ENCODE measurements at regions of chr9 and their contacts with region 1.

Region 1: GRCh38 chr9:89984214-89984613 is 379.4 kb downstream of the GADD45G start:
- DNase-seq: no peak
- ATAC-seq: no peak
- H3K4me3 ChIP-seq: no peak overlapping the region
- H3K27ac ChIP-seq: no peak overlapping the region
- H3K4me1 ChIP-seq: no peaks in the 10 kb centered on the region
- H3K27me3 ChIP-seq: no peaks in the 10 kb centered on the region
- CTCF ChIP-seq: no peak
- POLR2A ChIP-seq: no peak

Region 2: DNA sequence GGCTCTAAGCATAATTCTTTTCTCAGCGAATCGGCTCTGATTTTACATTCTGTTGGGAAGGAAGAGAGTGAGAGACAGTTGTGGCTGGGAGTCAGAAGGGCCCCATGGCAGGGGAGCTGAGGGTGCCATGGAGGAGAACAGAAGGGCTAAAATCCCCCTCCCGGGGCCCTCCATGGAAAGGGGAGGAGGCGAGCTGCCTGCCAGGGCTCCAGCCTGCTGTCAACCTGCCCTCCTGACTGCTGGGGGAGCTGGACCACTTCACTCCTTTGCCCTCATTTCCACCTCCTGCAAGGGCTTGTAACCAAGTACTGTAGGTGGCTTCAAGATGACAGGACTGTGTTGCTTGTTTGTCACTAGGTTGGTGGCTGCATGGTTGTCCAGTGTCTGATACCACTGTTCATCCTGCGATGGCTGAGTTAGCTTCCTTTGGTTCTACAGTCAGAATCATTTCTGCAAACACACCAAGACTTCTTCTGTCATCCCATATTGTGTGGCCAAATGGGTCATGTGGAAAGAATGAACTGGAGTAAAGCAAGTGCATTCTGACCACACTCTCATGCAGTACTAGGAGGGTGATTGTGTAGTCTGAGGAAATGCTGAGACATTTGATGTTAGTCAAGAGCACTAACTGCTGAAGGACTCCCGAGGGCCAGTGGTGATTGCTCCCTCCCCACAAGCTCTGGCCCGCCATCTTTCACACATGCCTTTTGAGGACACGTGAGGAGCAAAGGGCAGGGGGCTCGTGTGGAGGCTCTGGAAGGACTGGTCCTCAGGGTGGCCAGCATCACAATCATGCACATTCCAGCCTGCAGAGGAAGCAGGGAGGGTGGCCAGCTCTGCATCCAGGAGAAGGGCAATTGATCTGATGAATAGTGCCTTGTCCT is 72.3 kb before region 1 on chr9:
- intact Hi-C with region 1: no loop called
- DNase-seq: no peak
- ATAC-seq: no peak
- H3K4me3 ChIP-seq: no peak overlapping the region
- H3K27ac ChIP-seq: no peak overlapping the region
- H3K4me1 ChIP-seq: no peaks in the 10 kb centered on the region
- H3K27me3 ChIP-seq: no peaks in the 10 kb centered on the region
- CTCF ChIP-seq: no peak
- POLR2A ChIP-seq: no peak

Region 3: GRCh38 chr9:90086101-90086511 is 101.9 kb after region 1 on chr9:
- intact Hi-C with region 1: loop called (anchors 10 kb)
- DNase-seq: peak in 1 of 4 donors; percentile 58
- ATAC-seq: no peak
- H3K4me3 ChIP-seq: no peak overlapping the region
- H3K27ac ChIP-seq: no peak overlapping the region
- H3K4me1 ChIP-seq: no peaks in the 10 kb centered on the region
- H3K27me3 ChIP-seq: no peaks in the 10 kb centered on the region
- CTCF ChIP-seq: no peak
- POLR2A ChIP-seq: no peak

Measured in body of pancreas (tissue), 4 donors.